ENCODE measurements at regions of chr5 and their contacts with region 1.

Region 1: DNA sequence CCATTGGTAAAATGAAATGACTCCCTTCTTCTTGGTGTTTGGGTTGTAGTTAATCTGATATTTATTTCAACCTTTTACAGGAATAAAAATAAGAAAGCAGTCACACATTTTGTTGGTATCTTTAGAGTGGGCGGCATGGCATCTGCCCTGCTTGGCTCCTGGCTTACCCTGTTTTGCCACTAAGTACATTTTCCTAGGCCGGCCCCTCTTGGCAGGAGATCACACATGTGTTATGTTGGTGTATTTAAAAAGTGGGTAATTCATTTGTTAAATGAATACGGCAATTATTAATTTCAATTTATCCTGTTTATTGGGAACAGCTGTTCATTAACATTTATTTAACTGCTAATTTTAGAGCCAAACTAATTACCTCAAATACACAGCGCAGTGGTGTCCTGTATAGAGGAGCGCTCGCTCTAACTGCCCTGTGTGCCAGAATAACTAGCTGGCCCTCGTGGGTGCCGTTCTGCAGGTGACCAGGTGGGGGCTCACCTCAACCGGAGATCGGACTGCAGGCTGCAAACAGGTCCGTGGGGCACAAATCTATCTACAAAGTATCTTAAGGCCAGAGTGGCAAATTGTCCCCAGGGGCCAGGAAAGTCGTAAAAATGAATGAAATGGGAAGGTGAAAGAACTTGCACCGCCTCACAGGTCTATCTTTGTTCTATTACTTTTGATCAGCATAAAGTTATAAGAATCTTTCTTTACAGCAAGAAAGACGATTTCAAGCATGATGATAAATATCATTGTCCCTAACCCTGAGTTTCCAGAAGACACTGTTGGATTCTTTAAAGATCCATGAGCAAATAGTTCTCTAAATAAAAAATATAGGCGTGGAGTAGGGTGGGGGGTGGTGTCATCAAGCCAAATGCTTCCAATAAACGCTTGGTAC is 26.2 kb upstream of the GPR151 start:
- DNase-seq: peak; percentile 18
- H3K4me3 ChIP-seq: no peak overlapping the region
- H3K27ac ChIP-seq: no peak overlapping the region
- H3K27me3 ChIP-seq: no peaks in the 10 kb centered on the region
- CTCF ChIP-seq: peak; percentile 85

Region 2: DNA sequence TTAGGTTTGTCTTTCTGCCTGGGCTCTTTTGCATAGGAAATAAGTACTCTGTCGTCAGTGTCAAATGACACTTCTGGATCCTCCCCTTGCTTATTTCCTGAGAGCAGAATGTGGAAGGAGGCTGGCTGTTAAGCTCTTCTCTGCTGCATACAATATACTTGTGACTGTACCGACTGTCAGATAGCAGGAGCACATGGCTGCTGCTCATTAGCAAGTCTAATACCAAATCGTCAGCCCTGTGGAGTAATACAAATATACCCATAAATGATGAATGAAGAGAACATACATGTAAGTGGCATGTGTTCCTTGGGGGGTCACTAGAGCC is 26.1 kb before region 1 on chr5 and contains the start of gene GPR151:
- CTCF ChIA-PET with region 1: interaction called, 10 read pairs
- POLR2A ChIA-PET with region 1: no interaction called
- DNase-seq: no peak
- H3K4me3 ChIP-seq: no peak within 1 kb of the TSS
- H3K27ac ChIP-seq: no peak within 1 kb of the TSS
- H3K27me3 ChIP-seq: no peaks in the 10 kb centered on the region
- CTCF ChIP-seq: no peak
- polyA plus RNA-seq, gene GPR151: not detected in 2 replicates

Region 3: GRCh38 chr5:146662229-146662628 is 120.0 kb after region 1 on chr5:
- CTCF ChIA-PET with region 1: no interaction called
- POLR2A ChIA-PET with region 1: no interaction called
- DNase-seq: no peak
- H3K4me3 ChIP-seq: no peak overlapping the region
- H3K27ac ChIP-seq: no peak overlapping the region
- H3K27me3 ChIP-seq: no peaks in the 10 kb centered on the region
- CTCF ChIP-seq: peak; percentile 30

Region 4: GRCh38 chr5:146919304-146919703 is 377.1 kb after region 1 on chr5:
- CTCF ChIA-PET with region 1: no interaction called
- POLR2A ChIA-PET with region 1: no interaction called
- DNase-seq: no peak
- H3K4me3 ChIP-seq: no peak overlapping the region
- H3K27ac ChIP-seq: no peak overlapping the region
- H3K27me3 ChIP-seq: no peaks in the 10 kb centered on the region
- CTCF ChIP-seq: no peak

Region 5: DNA sequence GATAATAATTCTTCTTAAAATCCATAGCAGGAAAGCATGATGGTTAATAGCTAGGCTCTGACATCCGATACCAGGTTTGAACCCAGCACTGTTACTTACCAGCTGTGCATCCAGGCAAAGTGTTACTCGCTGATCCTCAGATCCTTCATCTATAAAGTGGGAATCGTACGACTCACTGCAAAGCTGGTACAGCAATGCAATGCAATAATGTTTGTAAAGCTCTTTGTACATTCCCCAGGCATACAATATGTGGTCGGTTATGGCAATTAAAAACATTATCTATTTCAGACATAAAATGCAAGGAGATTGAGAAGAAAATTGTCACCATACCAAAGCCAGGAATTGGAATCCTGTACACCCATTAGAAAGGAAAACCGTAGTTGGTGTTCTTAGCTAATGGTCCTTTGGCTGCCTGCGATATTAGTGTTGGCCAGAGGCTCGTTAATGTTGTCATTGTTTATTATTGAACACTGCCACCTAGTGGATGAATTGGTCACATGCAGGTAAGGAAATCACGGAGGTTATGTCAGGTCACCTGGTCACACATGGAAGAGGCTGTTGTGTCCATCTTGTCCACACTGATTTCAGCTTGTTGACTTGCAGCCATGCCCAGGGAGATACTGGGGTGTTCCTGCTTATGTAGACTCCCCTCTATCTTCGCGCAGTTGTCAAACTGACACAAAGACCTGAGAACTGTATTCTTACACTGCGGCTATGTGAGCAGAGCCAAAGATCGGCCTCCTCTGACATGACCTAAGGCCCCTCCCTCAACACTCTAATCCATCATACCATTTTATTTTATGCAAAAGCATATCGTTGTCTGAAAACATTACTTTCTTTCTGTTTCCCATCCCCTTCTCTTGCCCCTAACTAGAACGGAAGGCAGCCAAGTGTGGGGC is 423.8 kb after region 1 on chr5:
- CTCF ChIA-PET with region 1: interaction called, 85 read pairs
- POLR2A ChIA-PET with region 1: no interaction called
- DNase-seq: peak; percentile 33
- H3K4me3 ChIP-seq: no peak overlapping the region
- H3K27ac ChIP-seq: no peak overlapping the region
- H3K27me3 ChIP-seq: no peaks in the 10 kb centered on the region
- CTCF ChIP-seq: peak; percentile 74